CD8-positive, alpha-beta T cell (primary cell): ENCODE measurements at regions of chr11 and their contacts with region 1.

Region 1: DNA sequence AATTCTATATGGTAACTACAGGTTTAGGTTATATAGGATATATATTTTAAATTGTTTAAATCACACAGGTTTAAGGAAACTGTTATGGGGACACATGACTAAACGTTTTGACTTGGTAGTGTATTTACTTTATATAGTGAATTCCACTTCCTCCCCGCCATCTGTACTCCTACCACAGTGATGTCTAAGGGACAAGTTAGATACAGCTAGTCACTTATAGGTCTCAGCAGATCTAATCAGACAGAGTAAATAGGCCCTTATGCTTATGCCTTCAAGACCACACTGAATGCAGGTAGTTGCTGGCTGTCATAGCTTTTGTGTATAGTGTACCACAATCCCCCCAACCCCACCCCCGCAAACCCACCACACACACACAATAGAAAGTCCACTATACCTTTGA is 8.2 kb downstream of the SESN3 start:
- DNase-seq: no peak
- ATAC-seq: peak; percentile 63
- H3K4me3 ChIP-seq: no peak overlapping the region
- H3K4me3 Mint-ChIP-seq: no peak overlapping the region
- H3K27ac ChIP-seq: no peak overlapping the region
- H3K27ac Mint-ChIP-seq: peak overlapping the region; percentile 2
- H3K4me1 ChIP-seq: peaks cover 18% of the 10 kb centered on the region
- H3K4me1 Mint-ChIP-seq: peaks cover 41% of the 10 kb centered on the region
- H3K27me3 ChIP-seq: no peaks in the 10 kb centered on the region
- H3K27me3 Mint-ChIP-seq: no peaks in the 10 kb centered on the region
- CTCF ChIP-seq: no peak

Region 2: GRCh38 chr11:95200781-95201457 is 21.9 kb before region 1 on chr11:
- CTCF ChIA-PET with region 1: no interaction called
- POLR2A ChIA-PET with region 1: interaction called, 4 read pairs
- intact Hi-C with region 1: loop called in 1 of 2 experiments (anchors 2 kb)
- DNase-seq: no peak
- ATAC-seq: no peak
- H3K4me3 ChIP-seq: no peak overlapping the region
- H3K4me3 Mint-ChIP-seq: no peak overlapping the region
- H3K27ac ChIP-seq: no peak overlapping the region
- H3K27ac Mint-ChIP-seq: no peak overlapping the region
- H3K4me1 ChIP-seq: peaks cover 7% of the 10 kb centered on the region
- H3K4me1 Mint-ChIP-seq: peaks cover 52% of the 10 kb centered on the region
- H3K27me3 ChIP-seq: no peaks in the 10 kb centered on the region
- H3K27me3 Mint-ChIP-seq: no peaks in the 10 kb centered on the region
- CTCF ChIP-seq: no peak